ENCODE measurements at regions of chr12 and their contacts with region 1.

Region 1: DNA sequence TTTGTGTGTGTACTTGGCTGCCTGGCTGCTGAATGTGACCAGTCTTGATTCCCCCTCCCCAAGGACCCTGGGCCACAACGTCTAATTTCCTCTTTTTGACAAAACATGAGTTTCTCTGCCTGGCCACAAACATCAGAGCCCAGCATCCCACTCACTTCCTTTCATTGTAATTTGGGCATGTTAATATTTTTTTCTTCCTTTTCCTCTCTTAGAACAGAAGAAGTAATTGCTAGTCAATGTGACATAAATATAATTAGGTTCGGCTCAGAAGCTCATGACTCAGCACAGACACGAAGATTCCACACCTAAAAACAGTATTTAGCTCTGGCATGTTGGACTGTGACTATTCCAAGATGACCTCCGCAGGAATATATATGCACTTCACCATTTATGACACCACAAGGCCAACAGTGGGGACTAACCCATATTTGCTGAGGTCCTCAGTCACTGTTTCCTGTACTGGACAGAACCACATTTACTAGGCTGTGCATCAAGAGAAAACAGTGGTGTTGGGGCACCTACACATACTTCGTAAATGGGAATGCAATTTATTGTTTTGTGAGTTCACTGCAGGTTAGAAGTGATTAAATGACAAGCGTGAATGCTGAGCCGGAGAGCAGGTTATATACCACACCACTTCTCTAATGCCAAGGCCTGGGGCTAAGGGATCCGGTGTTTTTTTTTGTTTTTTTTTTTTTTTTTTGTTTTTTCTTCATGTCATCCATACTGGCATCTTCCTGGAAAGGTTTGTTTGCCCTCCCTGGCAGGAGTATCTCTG is 4.2 kb downstream of the GSG1 start:
- DNase-seq: no peak
- ATAC-seq: no peak
- H3K4me3 ChIP-seq: no peak overlapping the region
- H3K27ac ChIP-seq: peak overlapping the region; percentile 95
- H3K4me1 ChIP-seq: peaks cover 65% of the 10 kb centered on the region
- H3K27me3 ChIP-seq: no peaks in the 10 kb centered on the region
- CTCF ChIP-seq: no peak

Region 2: DNA sequence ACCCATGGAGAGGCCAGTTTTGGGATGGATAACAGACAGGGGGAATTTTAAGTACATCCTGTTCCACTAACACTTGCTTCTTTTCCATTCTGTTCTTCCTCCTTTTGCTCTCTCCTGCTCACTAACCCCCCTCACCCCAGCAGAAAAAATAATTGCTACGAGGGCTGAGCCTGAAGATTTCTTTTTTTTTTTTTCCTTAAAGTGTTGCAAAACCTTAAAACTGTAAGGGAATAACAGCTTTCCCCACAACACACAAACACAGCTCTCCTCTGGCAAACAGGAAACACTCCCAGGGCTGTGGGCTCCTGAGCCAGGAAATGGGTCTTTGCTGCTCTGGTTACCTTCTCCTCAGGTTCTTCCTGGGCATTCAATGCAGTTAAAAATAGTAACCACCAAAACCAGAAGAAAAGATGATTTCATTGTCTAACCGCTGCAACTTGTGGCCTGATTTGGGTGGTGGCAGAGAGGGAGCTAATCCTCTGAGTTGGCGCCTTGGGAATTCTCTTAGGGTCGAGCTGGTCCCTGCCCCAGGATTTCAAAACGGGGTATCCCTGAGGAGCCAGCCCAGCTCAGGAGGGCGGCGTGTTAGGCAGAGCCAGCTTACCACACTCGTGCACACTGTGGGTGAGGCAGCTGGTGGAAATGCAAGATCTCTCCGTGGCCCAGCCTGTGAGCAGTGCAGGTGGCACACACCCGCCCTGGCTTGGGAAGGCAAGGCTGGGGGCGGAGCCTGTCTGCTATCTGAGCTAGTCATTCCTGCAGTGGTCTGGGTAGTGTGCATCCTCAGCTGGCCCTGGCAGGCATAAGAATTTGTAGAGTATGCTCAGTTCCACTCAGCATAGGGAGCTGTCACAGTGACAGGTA is 80.2 kb after region 1 on chr12:
- intact Hi-C with region 1: no loop called
- DNase-seq: peak; percentile 66
- ATAC-seq: peak; percentile 75 to 79
- H3K4me3 ChIP-seq: peak overlapping the region; percentile 19
- H3K27ac ChIP-seq: peak overlapping the region; percentile 81
- H3K4me1 ChIP-seq: peaks cover 11% of the 10 kb centered on the region
- H3K27me3 ChIP-seq: no peaks in the 10 kb centered on the region
- CTCF ChIP-seq: no peak

Region 3: DNA sequence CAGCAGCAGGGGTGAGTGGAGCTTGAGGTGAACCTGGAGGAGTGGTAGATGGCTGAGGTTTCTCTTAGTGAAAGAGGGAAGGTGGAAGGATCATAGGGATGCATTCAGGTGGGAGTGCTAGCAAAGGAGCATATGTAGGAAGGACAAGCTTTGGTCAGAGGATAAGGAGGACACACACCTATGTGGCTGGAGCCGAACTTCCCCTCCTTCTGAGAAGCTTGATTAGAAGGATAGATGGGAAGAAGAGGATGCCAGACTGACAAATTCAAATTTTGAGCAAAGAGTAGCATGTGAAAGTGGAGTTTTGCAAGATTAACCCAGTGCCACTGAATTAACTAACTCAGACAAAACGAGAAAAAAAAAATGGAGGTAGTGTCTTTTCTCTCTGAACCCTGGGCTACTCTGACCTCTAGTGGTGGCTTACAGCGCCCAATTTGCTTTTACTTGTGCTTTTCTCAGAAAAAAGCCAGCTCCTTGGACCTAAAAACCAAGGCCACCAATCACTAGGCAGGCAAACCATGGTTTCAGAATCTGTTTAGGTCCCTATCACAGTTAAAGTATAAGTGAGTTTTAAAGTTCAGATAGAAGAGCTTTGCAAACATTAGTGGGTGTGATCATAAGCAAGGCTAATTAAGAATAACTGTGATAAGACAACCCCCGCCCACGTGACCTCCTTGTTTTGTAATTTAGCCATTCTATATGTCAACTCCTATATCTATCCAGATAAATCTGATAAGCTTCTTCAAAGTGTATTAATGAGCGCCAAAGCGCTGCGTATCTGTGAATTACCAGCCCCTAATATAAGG is 112.8 kb after region 1 on chr12:
- intact Hi-C with region 1: loop called (anchors 5 kb)
- DNase-seq: no peak
- ATAC-seq: peak; percentile 57 to 71
- H3K4me3 ChIP-seq: no peak overlapping the region
- H3K27ac ChIP-seq: no peak overlapping the region
- H3K4me1 ChIP-seq: peaks cover 47% of the 10 kb centered on the region
- H3K27me3 ChIP-seq: no peaks in the 10 kb centered on the region
- CTCF ChIP-seq: peak; percentile 85

Measured in lower lobe of right lung (tissue), 2 donors.